Dendritic cell treated with granulocyte-macrophage colony-stimulating factor and Interleukin-4, amounts not matched to agents 40 ng/mL and 50 ng/mL, for 4 days (primary cell): ENCODE measurements at regions of chr1 and their contacts with region 1.

Region 1: DNA sequence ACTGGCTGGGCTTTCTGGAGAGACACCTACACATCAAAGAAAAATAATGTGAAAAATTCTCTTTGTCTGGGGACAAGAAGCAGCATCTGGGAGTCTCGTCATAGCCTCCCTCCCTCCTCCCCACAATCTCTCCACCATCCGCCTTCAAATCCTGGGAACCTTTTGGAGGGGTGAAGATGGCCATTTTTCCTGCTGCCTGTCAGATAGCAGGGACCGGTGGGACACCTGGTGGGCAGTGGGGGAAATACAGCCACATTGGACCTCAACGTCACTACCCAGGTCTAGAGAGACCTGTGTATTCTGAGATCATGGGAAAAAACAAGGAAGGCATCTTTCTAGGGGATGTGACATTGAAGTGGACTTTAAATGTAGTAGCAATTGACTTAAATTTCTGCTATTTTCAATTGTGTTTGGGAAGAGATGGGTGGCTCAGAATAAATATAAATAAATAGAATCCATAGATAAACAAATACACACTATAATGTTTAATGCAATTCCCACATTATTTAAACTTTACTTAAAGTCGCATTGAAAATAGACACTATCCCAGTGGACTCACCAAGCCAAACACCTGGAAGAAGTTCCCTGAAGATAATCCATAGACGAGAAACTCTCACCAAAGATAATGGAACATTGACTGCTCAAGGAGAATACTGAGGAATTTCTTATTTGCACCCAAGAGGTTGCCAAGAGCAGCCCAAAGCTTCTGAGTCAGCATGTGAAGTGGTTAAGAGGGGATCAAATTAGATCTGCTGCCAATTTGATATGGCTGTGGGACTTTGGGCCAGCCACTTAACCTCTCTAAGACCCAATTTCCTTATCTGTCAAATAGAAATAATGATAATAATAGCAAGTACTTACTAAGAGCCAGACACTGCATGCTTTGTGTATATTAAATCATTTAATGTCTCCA is 147.6 kb upstream of the CAMK1G start:
- H3K4me3 Mint-ChIP-seq: no peak overlapping the region
- H3K27ac Mint-ChIP-seq: no peak overlapping the region
- H3K4me1 Mint-ChIP-seq: peaks cover 5% of the 10 kb centered on the region
- H3K27me3 Mint-ChIP-seq: peaks cover 13% of the 10 kb centered on the region

Region 2: DNA sequence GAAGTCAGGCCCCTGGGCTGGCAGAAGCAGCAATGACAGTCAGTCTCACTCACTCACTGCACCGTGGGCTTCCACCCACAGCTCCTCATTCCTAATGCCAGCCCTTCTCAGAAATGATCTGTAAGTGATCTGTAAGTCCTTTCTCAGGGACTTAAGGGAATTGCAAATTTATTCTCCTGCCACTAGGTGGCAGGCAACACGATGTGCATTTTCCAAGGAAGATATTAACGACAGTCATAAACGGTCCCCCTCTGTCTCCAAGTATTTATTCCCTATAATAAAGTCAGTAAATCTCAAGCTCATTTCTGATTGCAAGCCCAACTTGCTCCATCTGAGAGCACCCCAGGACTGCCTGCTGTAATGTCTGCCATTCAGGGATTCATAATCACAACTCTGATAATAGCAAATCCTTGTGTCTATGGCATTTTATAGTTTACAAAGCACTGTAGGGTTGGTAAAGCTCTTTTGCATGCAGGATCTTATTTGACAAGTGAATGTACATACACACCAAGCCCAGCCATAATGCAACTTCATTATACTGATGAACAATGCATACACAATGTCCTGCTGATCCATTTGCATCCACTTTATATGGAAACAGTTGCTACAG is 233.0 kb before region 1 on chr1:
- intact Hi-C with region 1: loop called (anchors 2 kb)
- H3K4me3 Mint-ChIP-seq: no peak overlapping the region
- H3K27ac Mint-ChIP-seq: no peak overlapping the region
- H3K4me1 Mint-ChIP-seq: peaks cover 9% of the 10 kb centered on the region
- H3K27me3 Mint-ChIP-seq: peaks cover 22% of the 10 kb centered on the region

Region 3: DNA sequence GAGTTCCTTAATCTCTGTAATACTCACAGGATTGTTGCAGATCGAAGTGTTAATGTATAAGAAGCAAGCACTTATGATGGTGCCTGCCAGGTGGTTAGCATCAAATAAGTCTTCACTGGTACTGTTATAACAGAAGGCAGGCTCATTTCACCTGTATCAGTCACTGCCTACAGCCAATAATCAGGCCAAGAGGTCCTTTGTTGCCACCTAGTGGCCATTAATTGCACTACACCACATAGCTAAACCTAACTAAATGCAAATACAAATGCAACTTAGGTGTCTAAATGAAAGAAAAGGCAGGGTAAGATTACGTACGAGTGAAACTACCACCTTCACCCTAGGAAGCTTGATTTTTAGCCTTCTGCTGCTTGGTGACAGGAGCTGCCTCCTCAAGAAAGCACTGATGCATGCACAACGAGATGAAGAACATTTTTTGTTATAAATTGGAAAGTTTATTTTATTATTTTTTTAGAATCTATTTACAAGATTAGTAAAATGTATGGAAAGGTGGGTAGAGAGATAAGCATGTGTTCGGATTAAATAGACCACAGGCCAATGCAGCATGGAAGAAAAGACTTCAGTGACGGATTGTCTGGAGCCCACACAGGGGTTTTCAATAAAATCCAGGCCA is 187.1 kb before region 1 on chr1:
- intact Hi-C with region 1: loop called (anchors 1 kb)
- H3K4me3 Mint-ChIP-seq: no peak overlapping the region
- H3K27ac Mint-ChIP-seq: no peak overlapping the region
- H3K4me1 Mint-ChIP-seq: no peaks in the 10 kb centered on the region
- H3K27me3 Mint-ChIP-seq: no peaks in the 10 kb centered on the region

Region 4: DNA sequence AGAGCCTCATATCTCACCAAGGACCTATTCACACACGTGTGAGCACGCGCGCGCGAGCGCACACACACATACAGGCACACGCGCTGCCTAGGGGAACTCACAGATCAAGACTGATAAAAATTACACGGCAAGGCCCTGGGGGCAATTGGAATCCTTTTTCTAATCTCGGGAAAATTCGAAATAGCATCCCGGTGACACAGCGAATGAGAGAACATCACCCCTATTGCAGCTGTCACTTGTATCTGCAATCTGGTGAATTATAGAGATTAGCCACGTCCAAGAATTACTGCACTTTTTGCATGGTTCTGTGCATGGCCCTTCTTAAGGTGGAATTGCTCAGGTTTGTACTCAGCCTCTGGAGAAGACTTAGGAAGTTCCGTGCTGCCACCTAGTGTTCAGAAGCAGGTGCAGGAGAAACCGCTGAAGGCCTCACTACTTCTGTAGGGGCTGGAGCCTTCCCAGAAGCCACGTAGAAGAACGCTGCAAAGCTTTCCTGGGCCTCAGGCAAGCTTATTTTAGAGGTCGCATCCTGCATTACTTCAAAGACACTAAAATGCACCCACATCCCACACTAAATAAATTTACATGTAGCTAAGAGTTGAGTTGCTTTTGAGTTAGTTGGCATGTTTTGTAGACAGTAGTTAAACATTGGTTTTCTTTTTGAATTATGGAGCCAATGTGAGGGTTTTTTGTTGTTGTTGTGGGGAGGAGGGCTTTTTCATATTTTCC is 81.6 kb before region 1 on chr1:
- intact Hi-C with region 1: loop called (anchors 2 kb)
- H3K4me3 Mint-ChIP-seq: no peak overlapping the region
- H3K27ac Mint-ChIP-seq: no peak overlapping the region
- H3K4me1 Mint-ChIP-seq: no peaks in the 10 kb centered on the region
- H3K27me3 Mint-ChIP-seq: peaks cover 3% of the 10 kb centered on the region

Region 5: GRCh38 chr1:209884665-209885117 is 448.8 kb after region 1 on chr1:
- intact Hi-C with region 1: no loop called
- H3K4me3 Mint-ChIP-seq: no peak overlapping the region
- H3K27ac Mint-ChIP-seq: no peak overlapping the region
- H3K4me1 Mint-ChIP-seq: no peaks in the 10 kb centered on the region
- H3K27me3 Mint-ChIP-seq: peaks cover 16% of the 10 kb centered on the region